ENCODE measurements at regions of chr1 and their contacts with region 1.

Region 1: GRCh38 chr1:193201021-193201420 is 14.6 kb upstream of the B3GALT2 start:
- DNase-seq: no peak
- H3K4me3 ChIP-seq: no peak overlapping the region
- H3K27ac ChIP-seq: no peak overlapping the region
- H3K4me1 ChIP-seq: no peaks in the 10 kb centered on the region
- H3K27me3 ChIP-seq: no peaks in the 10 kb centered on the region
- CTCF ChIP-seq: no peak

Region 2: DNA sequence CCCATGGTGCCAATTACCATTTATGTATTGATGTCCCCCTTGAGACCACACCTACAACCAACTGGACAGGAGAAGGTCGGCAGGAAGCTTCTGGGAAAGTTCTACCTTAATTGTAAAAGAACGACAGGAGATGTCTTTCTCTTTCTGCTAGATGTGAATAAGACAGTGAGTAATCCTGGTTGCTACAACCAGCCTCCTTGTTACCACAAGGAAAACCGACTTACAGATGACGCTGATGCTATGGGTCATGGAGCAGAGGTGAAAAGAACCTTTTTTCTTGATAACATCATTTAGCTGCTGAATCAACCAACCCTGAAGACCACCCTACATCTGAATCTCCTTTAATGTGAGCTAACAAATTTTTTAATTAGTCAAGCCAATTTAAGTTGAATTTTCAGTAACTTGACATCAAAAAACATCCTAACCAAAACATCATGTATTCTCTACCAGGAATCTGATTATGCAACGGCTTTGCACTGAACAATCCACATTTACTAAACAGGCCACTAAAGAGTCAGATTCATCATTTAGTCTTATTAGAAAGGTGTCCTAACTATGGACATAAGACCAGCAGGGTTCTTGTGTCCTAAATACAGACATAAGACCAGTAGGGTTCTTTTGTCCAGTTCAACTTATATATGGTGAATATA is 369.2 kb before region 1 on chr1:
- CTCF ChIA-PET with region 1: no interaction called
- POLR2A ChIA-PET with region 1: interaction called, 18 read pairs
- intact Hi-C with region 1: no loop called
- DNase-seq: no peak
- H3K4me3 ChIP-seq: no peak overlapping the region
- H3K27ac ChIP-seq: no peak overlapping the region
- H3K4me1 ChIP-seq: no peaks in the 10 kb centered on the region; the same call in 1 of the 2 replicates
- H3K27me3 ChIP-seq: no peaks in the 10 kb centered on the region
- CTCF ChIP-seq: no peak

Region 3: DNA sequence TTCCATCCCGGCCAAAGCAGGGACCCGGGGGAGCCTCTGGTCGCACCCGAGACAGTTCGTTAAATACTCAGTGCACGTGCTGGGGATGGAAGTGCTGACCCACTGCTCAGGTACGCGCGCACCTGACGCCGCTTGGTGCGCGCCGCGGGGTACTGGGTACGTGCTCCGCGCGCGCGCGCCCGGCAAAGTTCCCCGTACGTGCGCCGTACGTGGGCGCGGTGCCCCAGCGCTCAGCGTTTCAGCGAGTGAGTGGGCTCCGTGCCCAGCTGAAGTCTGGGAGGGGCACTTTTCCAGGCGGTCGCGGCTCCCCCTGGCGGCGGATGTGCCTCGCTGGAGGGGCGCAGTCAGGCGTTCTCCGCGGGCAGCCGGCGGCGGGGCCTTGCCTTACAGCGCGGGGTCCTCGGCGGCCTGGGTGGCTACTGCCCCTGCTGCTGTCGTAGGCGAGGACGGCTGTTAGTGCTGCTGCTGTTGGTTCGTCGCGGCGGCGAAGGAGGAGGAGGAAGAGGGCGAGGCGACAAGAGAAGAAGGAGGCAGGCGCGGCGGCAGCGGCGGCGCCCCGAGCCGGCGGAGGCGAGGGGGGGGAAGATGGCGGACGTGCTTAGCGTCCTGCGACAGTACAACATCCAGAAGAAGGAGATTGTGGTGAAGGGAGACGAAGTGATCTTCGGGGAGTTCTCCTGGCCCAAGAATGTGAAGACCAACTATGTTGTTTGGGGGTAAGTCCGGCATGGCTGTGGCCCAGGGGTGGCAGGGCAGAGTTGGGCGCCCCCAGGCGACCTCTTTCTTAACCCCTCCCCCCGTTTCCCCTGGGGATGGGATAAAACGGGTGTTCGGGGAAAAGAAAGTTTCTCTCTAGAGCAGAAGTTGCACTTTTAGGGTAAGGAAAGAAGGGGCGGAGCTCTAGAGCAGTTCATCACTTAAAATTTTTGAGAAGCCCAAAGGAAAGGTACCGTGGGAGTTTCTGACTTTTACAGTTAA is 79.1 kb before region 1 on chr1 and contains the start of gene CDC73:
- CTCF ChIA-PET with region 1: no interaction called
- POLR2A ChIA-PET with region 1: no interaction called
- intact Hi-C with region 1: no loop called
- DNase-seq: peak; percentile 85 to 99
- H3K4me3 ChIP-seq: peak within 1 kb of the TSS; percentile 100
- H3K27ac ChIP-seq: peak within 1 kb of the TSS; percentile 88
- H3K4me1 ChIP-seq: peaks cover 15% of the 10 kb centered on the region; the same call in 1 of the 2 replicates
- H3K27me3 ChIP-seq: no peaks in the 10 kb centered on the region
- CTCF ChIP-seq: peak; percentile 79
- total RNA-seq, gene CDC73: 39.6 and 47.1 TPM in 2 replicates